ENCODE measurements at regions of chr17 and their contacts with region 1.

Region 1: GRCh38 chr17:45235416-45236281 is 14.0 kb downstream of the FMNL1 start:
- DNase-seq: peak; percentile 59 to 83 (median 71)
- ATAC-seq: peak; percentile 78
- H3K4me3 ChIP-seq: no peak overlapping the region
- H3K4me3 Mint-ChIP-seq: peak overlapping the region in 3 of 10 donors; percentile 30 to 39 (median 38)
- H3K27ac ChIP-seq: peak overlapping the region; percentile 64
- H3K27ac Mint-ChIP-seq: peak overlapping the region; percentile 67 to 100 (median 93)
- H3K4me1 ChIP-seq: peaks cover 30 to 38% of the 10 kb centered on the region in 2 donors
- H3K4me1 Mint-ChIP-seq: peaks cover 38 to 75% (median 62%) of the 10 kb centered on the region in 7 donors
- H3K27me3 ChIP-seq: no peaks in the 10 kb centered on the region
- H3K27me3 Mint-ChIP-seq: no peaks in the 10 kb centered on the region

Region 2: DNA sequence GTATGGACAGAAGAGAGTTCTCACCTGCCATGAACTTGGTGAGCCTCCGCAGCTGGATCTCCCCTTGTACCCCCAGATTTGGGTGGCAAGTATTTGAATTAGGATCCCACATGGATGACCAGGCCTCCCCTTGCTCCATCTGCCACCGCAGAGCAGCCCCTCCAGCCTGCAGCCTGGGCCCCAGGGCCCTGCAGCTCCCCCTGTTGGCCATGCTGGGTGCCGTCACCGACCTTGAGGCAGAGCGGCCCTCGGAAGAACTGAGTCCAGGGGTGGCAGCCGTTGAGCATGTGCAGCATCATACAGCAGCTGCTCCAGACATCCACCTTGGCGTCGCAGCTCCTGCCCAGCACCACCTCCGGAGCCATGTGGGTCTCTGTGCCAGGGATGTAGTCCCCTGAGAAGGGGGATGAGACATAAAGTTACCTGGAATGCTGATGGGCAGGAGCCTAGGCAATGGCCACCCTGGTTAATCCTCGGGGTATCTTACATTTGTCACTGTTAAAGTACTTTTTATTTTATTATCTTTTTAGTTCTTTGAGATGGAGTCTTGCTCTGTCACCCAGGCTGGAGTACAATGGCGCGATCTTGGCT is 35.3 kb after region 1 on chr17:
- CTCF ChIA-PET with region 1: interaction called, 10 read pairs
- POLR2A ChIA-PET with region 1: interaction called, 4 read pairs
- intact Hi-C with region 1: loop called in 1 of 2 experiments (anchors 1 kb)
- DNase-seq: peak; percentile 38 to 71 (median 55)
- ATAC-seq: peak; percentile 85
- H3K4me3 ChIP-seq: no peak overlapping the region
- H3K4me3 Mint-ChIP-seq: no peak overlapping the region
- H3K27ac ChIP-seq: no peak overlapping the region
- H3K27ac Mint-ChIP-seq: peak overlapping the region in 3 of 9 donors; percentile 6 to 32 (median 31)
- H3K4me1 ChIP-seq: no peaks in the 10 kb centered on the region
- H3K4me1 Mint-ChIP-seq: peaks cover 0 to 12% (median 0%) of the 10 kb centered on the region in 7 donors
- H3K27me3 ChIP-seq: no peaks in the 10 kb centered on the region
- H3K27me3 Mint-ChIP-seq: no peaks in the 10 kb centered on the region

Region 3: DNA sequence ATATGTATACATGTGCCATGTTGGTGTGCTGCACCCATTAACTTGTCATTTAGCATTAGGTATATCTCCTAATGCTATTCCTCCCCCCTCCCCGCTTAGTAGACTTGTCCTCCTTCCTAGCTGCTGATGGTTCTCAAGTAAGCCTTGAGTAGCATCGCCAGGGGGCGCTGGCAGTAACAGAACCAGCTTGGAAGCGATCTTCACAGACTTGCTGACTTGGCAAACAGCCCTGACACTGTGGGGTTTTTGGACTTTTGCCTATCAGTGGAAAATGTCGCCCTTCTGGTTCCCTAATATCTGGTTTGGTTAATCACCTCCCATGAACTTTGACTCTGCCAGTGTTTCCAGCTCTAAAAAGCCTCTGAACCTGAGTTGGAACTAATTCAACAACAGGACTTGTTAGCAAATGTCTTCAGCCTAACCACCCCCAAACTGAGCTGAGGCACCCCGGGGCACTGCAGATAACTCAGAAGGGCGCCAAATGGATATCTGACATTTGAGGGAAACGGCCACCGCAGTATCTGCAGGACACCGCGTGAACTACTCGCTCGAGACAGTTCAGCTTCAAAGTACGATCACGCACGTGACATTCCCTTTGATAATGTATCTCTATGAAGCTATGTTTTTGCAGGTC is 41.7 kb after region 1 on chr17:
- CTCF ChIA-PET with region 1: interaction called, 10 read pairs
- POLR2A ChIA-PET with region 1: interaction called, 3 read pairs
- intact Hi-C with region 1: loop called in 1 of 2 experiments (anchors 2 kb)
- DNase-seq: peak; percentile 77 to 89 (median 86)
- ATAC-seq: peak; percentile 98
- H3K4me3 ChIP-seq: no peak overlapping the region
- H3K4me3 Mint-ChIP-seq: peak overlapping the region in 2 of 10 donors; percentile 26 to 28
- H3K27ac ChIP-seq: no peak overlapping the region
- H3K27ac Mint-ChIP-seq: peak overlapping the region; percentile 1 to 77 (median 40)
- H3K4me1 ChIP-seq: peaks cover 0 to 5% of the 10 kb centered on the region in 2 donors
- H3K4me1 Mint-ChIP-seq: peaks cover 3 to 22% (median 10%) of the 10 kb centered on the region in 7 donors
- H3K27me3 ChIP-seq: no peaks in the 10 kb centered on the region
- H3K27me3 Mint-ChIP-seq: no peaks in the 10 kb centered on the region

Region 4: DNA sequence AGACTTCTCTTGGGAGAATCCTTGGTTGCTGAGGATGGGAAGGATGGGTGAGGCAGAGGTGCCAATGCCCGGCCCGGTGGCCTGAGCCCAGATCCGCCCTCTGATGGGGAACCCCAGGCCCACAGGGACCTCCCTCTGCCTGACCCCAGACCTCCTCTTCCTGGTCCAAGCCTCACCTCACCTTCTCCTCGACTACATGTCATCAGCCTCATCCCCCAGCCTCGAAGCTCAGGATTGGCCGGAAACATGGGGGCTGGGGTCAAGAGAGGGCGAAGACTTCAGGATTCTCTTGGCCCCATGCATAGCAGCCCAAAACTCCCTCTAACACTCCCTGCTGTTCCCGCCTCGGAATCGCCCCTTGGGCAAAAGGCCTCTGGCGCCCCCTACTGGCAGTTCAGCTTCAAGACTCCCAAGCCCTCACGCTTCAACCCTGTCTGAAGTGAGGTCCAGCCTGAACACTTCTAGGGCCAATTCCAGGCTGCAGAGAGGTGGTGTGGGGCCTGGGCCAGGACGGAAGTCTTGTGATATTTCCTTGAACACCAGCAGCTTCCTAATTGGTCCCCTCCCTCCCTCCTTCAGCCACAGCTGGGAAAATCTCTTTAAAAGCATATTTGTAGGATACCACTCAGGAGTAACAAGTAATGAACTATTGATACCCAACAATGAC is 149.8 kb after region 1 on chr17:
- CTCF ChIA-PET with region 1: interaction called, 4 read pairs
- POLR2A ChIA-PET with region 1: interaction called, 3 read pairs
- intact Hi-C with region 1: loop called in 1 of 2 experiments (anchors 1 kb)
- DNase-seq: peak; percentile 70 to 92 (median 85)
- ATAC-seq: peak; percentile 96
- H3K4me3 ChIP-seq: no peak overlapping the region
- H3K4me3 Mint-ChIP-seq: peak overlapping the region in 1 of 10 donors; percentile 37
- H3K27ac ChIP-seq: no peak overlapping the region
- H3K27ac Mint-ChIP-seq: peak overlapping the region in 3 of 9 donors; percentile 2 to 91 (median 58)
- H3K4me1 ChIP-seq: peaks cover 0 to 10% of the 10 kb centered on the region in 2 donors
- H3K4me1 Mint-ChIP-seq: peaks cover 11 to 23% (median 15%) of the 10 kb centered on the region in 7 donors
- H3K27me3 ChIP-seq: no peaks in the 10 kb centered on the region
- H3K27me3 Mint-ChIP-seq: peaks cover 0 to 14% (median 5%) of the 10 kb centered on the region in 5 donors